ENCODE measurements at regions of chr7 and their contacts with region 1.

Region 1: GRCh38 chr7:36984710-36985313 is 260.5 kb upstream of the AOAH start:
- DNase-seq: no peak
- H3K4me3 ChIP-seq: no peak overlapping the region
- H3K27ac ChIP-seq: no peak overlapping the region
- H3K4me1 ChIP-seq: no peaks in the 10 kb centered on the region
- H3K27me3 ChIP-seq: no peaks in the 10 kb centered on the region
- CTCF ChIP-seq: no peak
- POLR2A ChIP-seq: no peak

Region 2: DNA sequence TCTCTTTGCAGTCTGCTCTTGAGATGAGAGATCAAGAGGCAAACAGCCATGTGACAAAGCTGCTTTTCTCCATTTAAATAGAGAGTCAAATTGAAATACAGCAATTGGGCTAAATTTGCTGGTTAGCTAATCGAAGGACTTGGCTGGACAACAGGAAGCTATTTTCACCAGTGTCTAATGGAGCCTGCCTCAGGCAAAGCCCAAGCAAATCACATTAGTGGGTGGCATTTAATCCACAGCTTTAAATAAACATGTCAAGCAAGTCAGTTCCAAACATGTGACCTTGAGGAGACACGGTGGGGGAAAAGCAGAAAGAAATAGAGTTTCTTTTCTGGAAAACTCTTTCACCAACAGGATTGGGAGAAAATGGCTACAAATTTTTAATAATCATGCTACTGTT is 80.0 kb before region 1 on chr7:
- intact Hi-C with region 1: no loop called
- DNase-seq: no peak
- H3K4me3 ChIP-seq: no peak overlapping the region
- H3K27ac ChIP-seq: no peak overlapping the region
- H3K4me1 ChIP-seq: no peaks in the 10 kb centered on the region
- H3K27me3 ChIP-seq: no peaks in the 10 kb centered on the region
- CTCF ChIP-seq: no peak
- POLR2A ChIP-seq: no peak

Region 3: DNA sequence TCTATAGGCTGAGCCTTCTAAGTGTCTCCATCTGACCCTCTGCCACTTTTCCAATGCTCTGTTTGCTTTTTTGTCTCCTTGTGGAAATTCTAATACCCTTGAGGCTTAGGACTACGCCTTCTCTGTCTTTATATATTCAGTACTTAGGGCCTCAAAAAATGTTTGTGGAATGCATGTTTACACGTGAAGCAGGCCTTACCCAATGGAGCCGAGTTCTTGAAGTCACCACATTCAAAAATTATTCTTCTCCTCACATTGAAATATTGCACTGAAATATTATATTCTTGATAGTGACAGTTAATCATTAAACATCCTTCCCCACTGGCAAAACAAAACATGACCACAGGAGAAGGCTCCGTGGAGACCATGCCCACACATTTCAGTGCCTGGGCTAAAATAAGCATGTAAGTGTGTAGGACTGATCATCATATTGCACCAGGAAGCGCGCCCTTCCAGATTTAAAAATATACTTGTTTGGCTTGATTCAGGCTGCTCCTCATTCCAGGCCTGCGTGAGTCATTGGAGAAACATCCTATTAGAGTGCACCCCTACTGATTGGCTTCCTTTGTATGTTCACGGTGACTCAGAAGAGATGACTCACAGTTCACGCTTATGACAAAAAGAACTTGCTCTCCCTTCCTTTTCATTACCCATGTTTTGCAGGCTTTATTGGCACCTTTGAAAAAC is 46.9 kb after region 1 on chr7:
- intact Hi-C with region 1: loop called (anchors 5 kb)
- DNase-seq: peak; percentile 88
- H3K4me3 ChIP-seq: no peak overlapping the region
- H3K27ac ChIP-seq: peak overlapping the region; percentile 65 to 67
- H3K4me1 ChIP-seq: peaks cover 10% of the 10 kb centered on the region
- H3K27me3 ChIP-seq: no peaks in the 10 kb centered on the region
- CTCF ChIP-seq: no peak
- POLR2A ChIP-seq: no peak